ENCODE measurements at regions of chr1 and their contacts with region 1.

Region 1: DNA sequence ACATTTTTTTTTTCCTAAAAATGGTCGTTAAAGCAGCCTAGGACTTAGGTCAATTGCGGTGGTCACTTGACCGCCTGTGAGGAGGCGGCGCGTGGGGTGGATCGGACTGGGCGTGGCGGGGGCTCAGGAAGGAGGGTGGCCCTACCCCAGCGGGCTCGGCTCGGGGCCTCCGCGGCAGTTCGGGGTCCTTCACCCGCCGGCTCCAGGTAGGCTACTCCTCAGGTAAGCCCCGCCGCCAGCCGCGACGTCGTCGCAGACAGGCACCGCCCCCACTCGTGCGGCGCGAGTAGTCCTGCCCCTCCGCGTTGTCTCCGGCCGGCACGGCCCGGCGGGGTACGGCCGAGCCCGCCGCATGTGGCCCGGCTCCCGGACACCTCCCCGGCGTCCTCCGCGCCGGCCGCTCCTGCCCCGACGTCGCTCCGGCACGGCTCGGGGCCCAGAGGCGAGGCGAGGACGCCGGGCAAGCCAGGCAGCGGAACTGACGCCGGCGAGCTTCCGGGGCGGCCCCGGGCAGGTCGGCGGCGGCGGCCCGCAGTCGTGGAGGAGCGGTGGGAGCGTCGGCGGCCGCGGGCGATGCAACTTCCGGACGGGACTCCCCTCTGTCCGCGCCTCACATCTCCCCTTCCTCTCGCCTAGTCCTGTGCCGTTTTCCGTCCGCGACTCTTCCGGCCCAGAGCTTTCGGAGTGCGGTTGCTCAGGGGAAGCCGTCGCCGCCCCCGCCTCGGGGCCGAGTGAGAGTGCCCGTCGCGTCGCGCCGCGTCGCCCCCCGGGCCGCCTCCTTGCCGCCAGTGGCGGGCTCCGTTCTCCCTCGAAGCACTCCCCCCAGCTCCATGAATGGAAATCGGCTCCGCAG is at the start of gene AGO3:
- DNase-seq: peak; percentile 88 to 93 (median 90)
- H3K4me3 ChIP-seq: peak within 1 kb of the TSS; percentile 78 to 89 (median 88)
- H3K4me3 Mint-ChIP-seq: peak within 1 kb of the TSS; percentile 90 to 94
- H3K27ac ChIP-seq: peak within 1 kb of the TSS; percentile 72 to 95
- H3K27ac Mint-ChIP-seq: peak within 1 kb of the TSS; percentile 92 to 98 (median 96)
- H3K4me1 ChIP-seq: peaks cover 21 to 32% of the 10 kb centered on the region in 2 donors
- H3K4me1 Mint-ChIP-seq: peaks cover 30% of the 10 kb centered on the region
- H3K27me3 ChIP-seq: no peaks in the 10 kb centered on the region
- H3K27me3 Mint-ChIP-seq: no peaks in the 10 kb centered on the region
- CTCF ChIP-seq: no peak
- polyA plus RNA-seq, gene AGO3: 6.3 to 9.0 (median 8.3) TPM

Region 2: DNA sequence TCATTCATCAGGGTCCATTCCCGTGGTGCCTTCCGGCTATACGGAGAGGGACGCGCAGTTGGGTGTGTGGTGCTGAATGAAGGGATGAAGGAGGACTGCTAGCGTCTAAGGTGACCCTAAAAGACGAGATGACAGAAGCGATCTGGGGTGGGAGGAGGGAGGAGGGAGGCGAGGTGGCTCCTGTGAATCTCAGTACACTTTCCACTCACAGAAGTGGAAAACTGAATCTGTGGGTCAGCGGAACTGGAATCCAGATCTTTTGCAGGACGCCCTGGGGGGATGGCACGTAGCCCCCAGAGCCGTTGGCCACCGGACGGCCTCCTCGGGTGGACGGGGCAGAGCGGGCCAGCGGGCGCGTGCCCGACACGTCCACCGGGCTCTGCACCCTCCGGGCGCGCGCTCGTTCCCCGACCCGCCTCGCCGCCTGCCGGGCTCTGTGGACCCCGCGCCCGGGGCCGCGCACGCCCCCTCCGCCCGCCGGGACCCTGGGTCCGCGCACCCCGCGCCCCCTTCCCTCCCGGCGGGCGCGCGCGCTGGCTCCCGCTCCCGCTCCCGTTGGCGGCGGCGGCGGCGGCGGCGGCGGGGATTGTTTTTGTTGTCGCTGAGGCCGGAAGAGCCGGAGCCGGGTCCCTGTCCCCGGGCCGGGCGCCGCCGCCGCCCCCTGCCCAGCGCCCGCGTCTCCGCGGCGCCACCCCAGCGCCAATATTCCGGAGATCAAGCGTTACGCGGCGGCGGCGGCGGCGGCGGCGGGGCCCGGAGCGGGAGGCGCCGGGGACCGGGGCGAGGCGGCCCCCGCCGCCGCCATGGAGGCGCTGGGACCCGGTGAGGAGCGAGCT is 123.0 kb before region 1 on chr1 and contains the start of gene AGO4:
- intact Hi-C with region 1: loop called in 1 of 2 experiments (anchors 10 kb)
- DNase-seq: peak; percentile 23 to 27 (median 26)
- H3K4me3 ChIP-seq: peak within 1 kb of the TSS; percentile 85 to 96 (median 87)
- H3K4me3 Mint-ChIP-seq: peak within 1 kb of the TSS; percentile 93 to 99
- H3K27ac ChIP-seq: peak within 1 kb of the TSS; percentile 92 to 94
- H3K27ac Mint-ChIP-seq: peak within 1 kb of the TSS; percentile 92 to 100 (median 96)
- H3K4me1 ChIP-seq: peaks cover 74 to 89% of the 10 kb centered on the region in 2 donors
- H3K4me1 Mint-ChIP-seq: peaks cover 80% of the 10 kb centered on the region
- H3K27me3 ChIP-seq: no peaks in the 10 kb centered on the region
- H3K27me3 Mint-ChIP-seq: peaks cover 0 to under 1% (median 0%) of the 10 kb centered on the region in 3 donors
- CTCF ChIP-seq: no peak
- polyA plus RNA-seq, gene AGO4: 20.0 to 46.9 (median 24.0) TPM

Region 3: DNA sequence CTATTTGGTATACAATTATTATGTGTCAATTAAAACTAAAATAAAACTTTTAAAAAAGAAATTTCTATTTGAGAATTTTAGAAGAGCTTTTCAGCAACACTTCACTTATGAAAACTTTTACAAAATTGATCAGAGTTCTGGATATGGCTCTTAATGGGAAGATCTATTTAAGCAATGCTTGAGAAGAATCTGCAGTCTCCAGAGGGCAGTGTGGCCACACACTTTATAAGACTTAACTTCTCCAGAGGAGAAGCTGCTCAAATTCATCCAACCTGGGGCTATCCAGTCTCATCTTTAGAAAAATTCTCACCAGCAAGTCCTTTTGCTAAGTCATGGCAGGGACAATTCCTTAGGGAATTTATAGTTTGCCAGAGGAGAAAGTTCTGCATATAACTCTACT is 73.0 kb before region 1 on chr1:
- intact Hi-C with region 1: no loop called
- DNase-seq: peak in 1 of 3 donors; percentile 37
- H3K4me3 ChIP-seq: no peak overlapping the region
- H3K4me3 Mint-ChIP-seq: no peak overlapping the region
- H3K27ac ChIP-seq: peak overlapping the region in 1 of 2 donors; percentile 38
- H3K27ac Mint-ChIP-seq: peak overlapping the region in 1 of 7 donors; percentile 40
- H3K4me1 ChIP-seq: peaks cover 41% of the 10 kb centered on the region in 2 donors
- H3K4me1 Mint-ChIP-seq: peaks cover 47% of the 10 kb centered on the region
- H3K27me3 ChIP-seq: no peaks in the 10 kb centered on the region
- H3K27me3 Mint-ChIP-seq: peaks cover 0 to 5% (median 0%) of the 10 kb centered on the region in 3 donors
- CTCF ChIP-seq: peak; percentile 40

Region 4: DNA sequence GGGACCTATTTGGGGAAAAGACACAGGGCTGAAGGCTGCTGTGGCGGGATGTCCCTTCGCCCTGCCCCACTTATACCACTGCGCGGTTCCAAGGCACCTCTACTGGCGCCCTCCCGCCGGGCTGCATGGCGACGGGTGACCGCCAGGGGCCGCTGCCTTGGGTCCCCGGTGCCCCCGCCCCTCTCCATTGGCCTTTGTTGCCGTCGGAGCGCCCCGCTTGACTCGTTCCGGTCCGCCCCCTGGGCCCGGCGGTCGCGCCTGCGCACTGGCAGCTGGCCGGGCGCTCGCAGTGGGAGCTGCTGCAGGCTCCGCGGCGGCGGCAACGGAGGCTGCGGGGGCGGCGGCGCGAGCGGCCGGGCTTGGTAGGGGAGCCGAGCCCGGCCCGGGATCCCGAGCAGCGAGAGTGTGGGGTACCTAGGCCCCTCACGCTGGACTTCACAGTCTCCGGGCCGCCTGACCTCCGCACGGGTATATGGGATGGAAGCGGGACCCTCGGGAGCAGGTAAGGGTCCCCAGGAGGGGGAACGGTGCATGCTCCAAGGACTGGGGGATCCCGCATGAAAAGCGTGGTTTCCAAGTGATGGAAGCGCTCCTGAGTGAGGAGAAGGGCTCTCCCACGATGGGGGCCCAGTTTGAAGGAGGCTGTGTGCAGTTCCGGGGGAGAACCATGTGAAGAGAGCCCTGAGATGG is 47.7 kb before region 1 on chr1 and contains the start of gene AGO1:
- intact Hi-C with region 1: loop called in 1 of 2 experiments (anchors 5 kb)
- DNase-seq: peak; percentile 92 to 95 (median 93)
- H3K4me3 ChIP-seq: peak within 1 kb of the TSS; percentile 94 to 98 (median 95)
- H3K4me3 Mint-ChIP-seq: peak within 1 kb of the TSS; percentile 95
- H3K27ac ChIP-seq: peak within 1 kb of the TSS; percentile 43 to 87
- H3K27ac Mint-ChIP-seq: peak within 1 kb of the TSS; percentile 76 to 93 (median 88)
- H3K4me1 ChIP-seq: peaks cover 51 to 53% of the 10 kb centered on the region in 2 donors
- H3K4me1 Mint-ChIP-seq: peaks cover 52% of the 10 kb centered on the region
- H3K27me3 ChIP-seq: no peaks in the 10 kb centered on the region
- H3K27me3 Mint-ChIP-seq: peaks cover 0 to 5% (median 1%) of the 10 kb centered on the region in 3 donors
- CTCF ChIP-seq: peak; percentile 98
- polyA plus RNA-seq, gene AGO1: 10.9 to 19.4 (median 13.9) TPM

Region 5: GRCh38 chr1:35894183-35894582 is 36.6 kb before region 1 on chr1:
- intact Hi-C with region 1: loop called in 1 of 2 experiments (anchors 5 kb)
- DNase-seq: peak; percentile 93 to 98 (median 93)
- H3K4me3 ChIP-seq: peak overlapping the region in 1 of 3 experiments; percentile 21
- H3K4me3 Mint-ChIP-seq: peak overlapping the region; percentile 7 to 55
- H3K27ac ChIP-seq: peak overlapping the region; percentile 84 to 92
- H3K27ac Mint-ChIP-seq: peak overlapping the region; percentile 96 to 99 (median 98)
- H3K4me1 ChIP-seq: peaks cover 28 to 36% of the 10 kb centered on the region in 2 donors
- H3K4me1 Mint-ChIP-seq: peaks cover 33% of the 10 kb centered on the region
- H3K27me3 ChIP-seq: no peaks in the 10 kb centered on the region
- H3K27me3 Mint-ChIP-seq: peaks cover 0 to 1% (median 0%) of the 10 kb centered on the region in 3 donors
- CTCF ChIP-seq: no peak

Region 6: DNA sequence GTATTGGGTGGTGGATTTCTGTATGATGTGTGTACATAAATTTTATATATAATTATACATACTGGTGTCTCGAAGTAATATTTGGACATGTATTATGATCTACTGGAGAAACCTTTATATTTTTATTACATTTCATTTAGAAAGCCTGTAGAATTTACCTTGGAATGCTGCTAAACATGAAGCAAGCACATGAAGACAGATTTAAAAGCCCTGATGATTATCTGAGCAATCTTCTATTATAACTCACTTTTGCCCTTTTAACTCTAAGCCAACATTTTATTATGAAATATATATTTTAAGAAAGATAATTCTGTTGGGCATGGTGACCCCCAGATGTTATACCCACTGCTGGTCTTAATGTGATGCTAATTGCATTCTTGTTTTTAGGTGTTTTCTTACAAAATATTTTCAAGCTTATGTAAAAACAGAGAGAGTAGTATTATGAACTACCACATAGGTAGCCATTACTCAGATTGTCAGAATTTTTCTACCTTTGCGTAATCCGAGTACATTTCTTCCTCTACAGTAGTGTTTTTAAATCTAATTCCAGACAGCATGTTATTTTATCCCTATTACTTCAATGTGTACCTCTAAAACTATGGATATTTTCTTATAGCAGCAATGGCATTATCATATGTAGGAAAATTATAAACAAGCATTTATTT is 42.8 kb after region 1 on chr1:
- intact Hi-C with region 1: no loop called
- DNase-seq: no peak
- H3K4me3 ChIP-seq: no peak overlapping the region
- H3K4me3 Mint-ChIP-seq: no peak overlapping the region
- H3K27ac ChIP-seq: no peak overlapping the region
- H3K27ac Mint-ChIP-seq: peak overlapping the region in 1 of 7 donors; percentile 27
- H3K4me1 ChIP-seq: no peaks in the 10 kb centered on the region
- H3K4me1 Mint-ChIP-seq: peaks cover 6% of the 10 kb centered on the region
- H3K27me3 ChIP-seq: no peaks in the 10 kb centered on the region
- H3K27me3 Mint-ChIP-seq: peaks cover 0 to 2% (median 2%) of the 10 kb centered on the region in 3 donors
- CTCF ChIP-seq: no peak